ENCODE measurements at regions of chr2 and their contacts with region 1.

Region 1: DNA sequence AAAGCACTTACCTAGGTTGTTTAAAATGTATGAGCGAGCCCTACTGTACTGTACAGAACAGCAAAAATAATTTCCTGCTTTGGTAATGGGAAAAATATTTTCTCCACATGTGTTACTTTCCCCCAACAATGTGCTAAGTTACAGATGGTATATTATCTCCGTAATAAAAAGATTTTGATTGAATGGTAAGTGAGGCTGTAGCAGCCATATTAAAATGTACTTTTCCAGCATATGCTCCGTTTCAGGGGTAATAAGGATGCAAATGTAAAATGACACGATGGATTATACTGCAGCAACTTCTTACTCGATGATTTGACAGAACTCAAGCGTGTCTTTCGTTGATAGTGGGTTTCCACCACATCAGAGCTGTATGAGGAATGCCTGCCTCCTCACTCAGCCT is 50.5 kb downstream of the OSBPL6 start:
- DNase-seq: no peak
- ATAC-seq: no peak
- H3K4me3 ChIP-seq: no peak overlapping the region
- H3K27ac ChIP-seq: peak overlapping the region; percentile 90
- H3K4me1 ChIP-seq: peaks cover 64% of the 10 kb centered on the region
- H3K27me3 ChIP-seq: no peaks in the 10 kb centered on the region
- CTCF ChIP-seq: no peak

Region 2: GRCh38 chr2:178057179-178057680 is 187.5 kb before region 1 on chr2:
- intact Hi-C with region 1: no loop called
- DNase-seq: no peak
- ATAC-seq: no peak
- H3K4me3 ChIP-seq: no peak overlapping the region
- H3K27ac ChIP-seq: no peak overlapping the region
- H3K4me1 ChIP-seq: no peaks in the 10 kb centered on the region
- H3K27me3 ChIP-seq: no peaks in the 10 kb centered on the region
- CTCF ChIP-seq: no peak

Region 3: DNA sequence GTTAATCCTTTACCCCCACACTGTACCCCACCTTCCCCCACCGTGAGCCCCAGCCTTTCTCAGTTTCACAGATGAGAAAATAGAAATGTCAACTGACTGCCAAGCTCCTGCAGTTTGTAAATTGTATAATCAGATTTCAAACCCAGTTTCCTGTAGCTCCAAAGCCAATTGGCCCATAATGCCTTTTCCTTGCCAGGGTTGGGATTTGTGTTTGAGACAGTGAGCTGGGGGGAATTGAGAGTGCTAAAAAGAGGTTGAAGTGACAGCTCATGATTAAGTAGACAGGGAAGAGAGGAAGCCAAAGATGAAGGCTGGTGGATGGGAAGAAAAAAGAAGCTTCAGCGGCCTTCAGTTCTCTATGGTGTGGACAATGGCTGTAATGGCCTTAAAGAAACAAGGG is 39.8 kb before region 1 on chr2:
- intact Hi-C with region 1: loop called (anchors 5 kb)
- DNase-seq: no peak
- ATAC-seq: peak in 3 of 4 donors; percentile 33 to 61 (median 60)
- H3K4me3 ChIP-seq: peak overlapping the region; percentile 16
- H3K27ac ChIP-seq: peak overlapping the region; percentile 75
- H3K4me1 ChIP-seq: peaks cover 74% of the 10 kb centered on the region
- H3K27me3 ChIP-seq: no peaks in the 10 kb centered on the region
- CTCF ChIP-seq: no peak

Region 4: DNA sequence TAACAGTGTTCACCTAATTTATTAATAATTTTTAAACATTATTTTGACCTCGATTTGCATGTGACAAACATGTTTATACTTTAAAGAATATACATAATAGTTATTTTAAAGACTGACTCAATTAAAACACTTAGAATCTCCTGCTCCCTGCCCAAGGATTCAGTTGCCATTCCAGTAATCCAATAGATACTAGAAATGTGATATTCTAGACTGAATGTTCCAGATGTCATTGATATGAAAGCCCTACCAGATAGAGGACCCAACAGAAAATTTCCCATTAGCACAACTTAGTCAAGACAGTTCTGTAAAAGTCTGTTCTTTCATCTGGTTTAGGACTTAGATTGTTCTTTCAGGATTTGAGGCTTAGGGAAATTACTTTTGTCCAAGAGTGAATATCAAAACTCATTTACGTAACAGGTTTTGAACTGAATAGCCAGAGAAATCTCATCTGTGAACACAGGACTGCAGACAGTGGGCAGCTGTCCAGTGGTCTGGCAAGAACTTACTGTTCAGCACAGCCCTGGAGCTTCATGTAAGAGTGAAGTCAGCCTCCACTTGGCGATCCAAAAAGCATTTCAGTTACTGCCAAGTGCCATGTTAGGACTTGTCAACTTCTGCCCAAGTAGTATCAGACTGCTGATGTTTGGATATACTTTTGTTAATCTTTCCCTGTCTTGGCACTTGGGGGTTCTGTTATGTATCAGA is 27.0 kb after region 1 on chr2:
- intact Hi-C with region 1: loop called in 1 of 2 experiments (anchors 2 kb)
- DNase-seq: peak; percentile 85 to 94
- ATAC-seq: peak; percentile 89 to 93 (median 93)
- H3K4me3 ChIP-seq: peak overlapping the region; percentile 30
- H3K27ac ChIP-seq: peak overlapping the region; percentile 88
- H3K4me1 ChIP-seq: peaks cover 67% of the 10 kb centered on the region
- H3K27me3 ChIP-seq: no peaks in the 10 kb centered on the region
- CTCF ChIP-seq: no peak

Region 5: DNA sequence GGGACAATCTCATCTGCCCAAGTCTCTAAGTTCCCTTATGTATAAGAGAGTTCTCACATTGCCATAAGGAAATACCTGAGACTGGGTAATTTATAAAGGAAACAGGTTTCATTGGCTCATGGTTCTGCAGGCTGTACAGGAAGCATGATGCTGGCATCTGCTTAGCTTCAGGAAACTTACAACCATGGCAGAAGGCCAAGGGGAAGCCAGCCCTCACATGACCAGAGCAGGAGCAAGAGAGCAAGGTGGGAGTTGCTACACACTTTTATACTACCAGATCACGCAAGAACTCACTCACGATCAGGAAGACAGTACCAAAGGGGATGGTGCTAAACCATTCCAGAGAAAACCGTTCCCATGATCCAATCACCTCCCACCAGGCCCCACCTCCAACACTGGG is 132.3 kb after region 1 on chr2:
- intact Hi-C with region 1: no loop called
- DNase-seq: no peak
- ATAC-seq: peak; percentile 12 to 29 (median 20)
- H3K4me3 ChIP-seq: no peak overlapping the region
- H3K27ac ChIP-seq: no peak overlapping the region
- H3K4me1 ChIP-seq: no peaks in the 10 kb centered on the region
- H3K27me3 ChIP-seq: no peaks in the 10 kb centered on the region
- CTCF ChIP-seq: no peak

Region 6: DNA sequence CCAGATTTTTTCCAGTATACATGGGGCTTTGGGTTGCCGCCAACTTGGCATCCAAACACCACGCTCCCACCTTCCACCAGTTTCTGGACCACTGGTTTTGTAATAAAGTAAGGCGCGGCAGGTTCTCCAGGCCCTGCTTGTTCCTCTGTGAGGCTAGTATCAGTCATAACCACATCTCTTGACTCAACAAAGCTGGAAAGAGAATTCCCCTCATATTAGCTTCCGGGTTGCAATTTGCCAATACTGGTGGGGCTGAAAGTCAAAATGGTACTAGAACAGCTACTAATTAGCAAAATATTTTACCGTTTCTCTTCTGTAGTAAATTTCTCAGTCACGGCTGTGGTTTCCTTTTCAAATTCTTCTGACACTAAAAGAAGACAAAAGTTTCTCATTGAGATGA is 537.5 kb after region 1 on chr2:
- intact Hi-C with region 1: no loop called
- DNase-seq: no peak
- ATAC-seq: peak in 2 of 4 donors; percentile 5 to 7
- H3K4me3 ChIP-seq: peak overlapping the region; percentile 39
- H3K27ac ChIP-seq: peak overlapping the region; percentile 30
- H3K4me1 ChIP-seq: peaks cover 68% of the 10 kb centered on the region
- H3K27me3 ChIP-seq: no peaks in the 10 kb centered on the region
- CTCF ChIP-seq: no peak